ENCODE measurements at regions of chr21 and their contacts with region 1.

Region 1: GRCh38 chr21:45130324-45130774 is 56.0 kb downstream of the ADARB1 start:
- DNase-seq: no peak
- ATAC-seq: no peak
- H3K4me3 ChIP-seq: no peak overlapping the region
- H3K4me3 Mint-ChIP-seq: no peak overlapping the region
- H3K27ac ChIP-seq: no peak overlapping the region
- H3K27ac Mint-ChIP-seq: no peak overlapping the region
- H3K4me1 ChIP-seq: peaks cover 16% of the 10 kb centered on the region
- H3K4me1 Mint-ChIP-seq: peaks cover 35% of the 10 kb centered on the region
- H3K27me3 ChIP-seq: no peaks in the 10 kb centered on the region
- H3K27me3 Mint-ChIP-seq: no peaks in the 10 kb centered on the region
- CTCF ChIP-seq: no peak

Region 2: DNA sequence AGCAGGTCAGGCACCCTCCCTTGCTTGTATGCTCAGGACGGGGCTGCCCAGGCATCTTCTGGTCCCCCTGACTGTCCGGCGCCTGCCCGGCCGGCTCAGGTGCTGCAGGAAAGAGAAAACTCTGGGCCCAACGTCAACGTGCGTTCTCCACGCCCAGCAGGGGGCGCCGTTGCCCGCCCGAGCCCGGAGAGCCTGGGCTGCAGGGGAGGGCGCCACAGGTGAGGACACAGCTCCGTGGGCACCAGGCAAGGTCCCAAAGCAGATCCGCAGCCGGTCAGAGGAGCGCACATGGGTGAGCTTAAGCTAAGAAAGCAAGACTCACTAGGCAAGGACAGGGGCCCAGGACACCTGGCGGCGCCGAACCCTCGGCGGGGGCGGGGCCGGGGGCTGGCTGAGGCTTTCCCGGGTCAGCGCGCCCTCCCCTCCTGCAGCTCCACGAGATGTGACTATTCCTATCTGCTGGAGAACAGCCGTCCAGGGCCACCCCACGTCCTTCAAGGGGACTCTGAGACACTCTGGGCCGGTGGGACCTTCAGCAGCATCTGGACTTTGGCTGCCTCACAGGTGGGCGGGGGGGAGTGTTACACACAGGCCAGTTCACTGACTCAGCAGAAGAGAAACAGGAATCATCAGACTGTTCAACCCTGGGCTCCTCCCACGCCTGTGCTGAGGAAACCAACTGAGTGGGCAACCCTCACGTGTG is 619.7 kb before region 1 on chr21:
- CTCF ChIA-PET with region 1: no interaction called
- POLR2A ChIA-PET with region 1: no interaction called
- intact Hi-C with region 1: loop called in 1 of 2 experiments (anchors 10 kb)
- DNase-seq: peak; percentile 68 to 91 (median 82)
- ATAC-seq: peak; percentile 96
- H3K4me3 ChIP-seq: peak overlapping the region; percentile 41
- H3K4me3 Mint-ChIP-seq: peak overlapping the region; percentile 42
- H3K27ac ChIP-seq: no peak overlapping the region
- H3K27ac Mint-ChIP-seq: no peak overlapping the region
- H3K4me1 ChIP-seq: peaks cover 12% of the 10 kb centered on the region
- H3K4me1 Mint-ChIP-seq: no peaks in the 10 kb centered on the region
- H3K27me3 ChIP-seq: no peaks in the 10 kb centered on the region
- H3K27me3 Mint-ChIP-seq: no peaks in the 10 kb centered on the region
- CTCF ChIP-seq: peak; percentile 96

Region 3: GRCh38 chr21:44626262-44626661 is 504.1 kb before region 1 on chr21:
- CTCF ChIA-PET with region 1: no interaction called
- POLR2A ChIA-PET with region 1: no interaction called
- intact Hi-C with region 1: no loop called
- DNase-seq: peak in 1 of 14 experiments; percentile 68
- ATAC-seq: no peak
- H3K4me3 ChIP-seq: no peak overlapping the region
- H3K4me3 Mint-ChIP-seq: no peak overlapping the region
- H3K27ac ChIP-seq: no peak overlapping the region
- H3K27ac Mint-ChIP-seq: no peak overlapping the region
- H3K4me1 ChIP-seq: peaks cover 47% of the 10 kb centered on the region
- H3K4me1 Mint-ChIP-seq: peaks cover 25% of the 10 kb centered on the region
- H3K27me3 ChIP-seq: no peaks in the 10 kb centered on the region
- H3K27me3 Mint-ChIP-seq: no peaks in the 10 kb centered on the region
- CTCF ChIP-seq: no peak

Region 4: DNA sequence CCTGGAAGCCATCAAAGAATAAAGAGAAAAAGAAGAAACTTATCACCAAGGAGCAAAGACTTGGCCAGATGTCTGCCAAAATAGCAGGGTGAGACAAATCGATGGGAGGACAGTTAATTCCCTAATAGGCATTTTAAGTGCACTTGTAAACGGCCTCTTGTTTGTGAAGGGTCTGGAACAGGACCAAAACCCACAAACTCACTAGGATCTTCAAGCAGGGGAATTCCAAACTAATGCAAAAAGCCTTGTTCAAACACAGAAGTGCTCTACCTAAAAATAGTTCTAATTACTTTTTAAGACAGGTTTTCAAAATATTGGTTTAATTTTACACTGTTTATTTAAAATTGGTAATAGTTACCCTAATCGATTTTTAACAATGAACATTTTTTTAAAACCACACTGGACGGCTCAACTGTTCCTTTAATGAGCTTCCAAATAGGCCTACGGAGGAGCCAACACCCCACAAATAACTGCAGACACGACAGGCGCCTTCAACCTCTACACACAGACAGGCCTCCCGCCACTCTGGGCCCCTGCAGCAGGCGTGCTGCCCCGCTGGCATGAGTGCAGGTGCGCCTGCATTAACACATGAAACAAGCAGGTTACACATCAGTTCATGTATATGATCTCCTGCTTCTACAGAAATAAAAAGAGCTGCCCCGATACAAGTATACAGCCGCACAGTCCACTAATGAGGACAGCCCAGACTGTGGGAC is 344.6 kb before region 1 on chr21:
- CTCF ChIA-PET with region 1: no interaction called
- POLR2A ChIA-PET with region 1: no interaction called
- intact Hi-C with region 1: no loop called
- DNase-seq: no peak
- ATAC-seq: no peak
- H3K4me3 ChIP-seq: no peak overlapping the region
- H3K4me3 Mint-ChIP-seq: no peak overlapping the region
- H3K27ac ChIP-seq: no peak overlapping the region
- H3K27ac Mint-ChIP-seq: no peak overlapping the region
- H3K4me1 ChIP-seq: no peaks in the 10 kb centered on the region
- H3K4me1 Mint-ChIP-seq: peaks cover 47% of the 10 kb centered on the region
- H3K27me3 ChIP-seq: no peaks in the 10 kb centered on the region
- H3K27me3 Mint-ChIP-seq: no peaks in the 10 kb centered on the region
- CTCF ChIP-seq: no peak

Region 5: GRCh38 chr21:44949779-44950198 is 180.6 kb before region 1 on chr21:
- CTCF ChIA-PET with region 1: interaction called, 35 read pairs
- POLR2A ChIA-PET with region 1: interaction called, 4 read pairs
- intact Hi-C with region 1: loop called (anchors 1 kb)
- DNase-seq: peak; percentile 73 to 91 (median 82)
- ATAC-seq: peak; percentile 88
- H3K4me3 ChIP-seq: no peak overlapping the region
- H3K4me3 Mint-ChIP-seq: no peak overlapping the region
- H3K27ac ChIP-seq: no peak overlapping the region
- H3K27ac Mint-ChIP-seq: no peak overlapping the region
- H3K4me1 ChIP-seq: peaks cover 16% of the 10 kb centered on the region
- H3K4me1 Mint-ChIP-seq: peaks cover 5% of the 10 kb centered on the region
- H3K27me3 ChIP-seq: no peaks in the 10 kb centered on the region
- H3K27me3 Mint-ChIP-seq: no peaks in the 10 kb centered on the region
- CTCF ChIP-seq: peak; percentile 92

Region 6: DNA sequence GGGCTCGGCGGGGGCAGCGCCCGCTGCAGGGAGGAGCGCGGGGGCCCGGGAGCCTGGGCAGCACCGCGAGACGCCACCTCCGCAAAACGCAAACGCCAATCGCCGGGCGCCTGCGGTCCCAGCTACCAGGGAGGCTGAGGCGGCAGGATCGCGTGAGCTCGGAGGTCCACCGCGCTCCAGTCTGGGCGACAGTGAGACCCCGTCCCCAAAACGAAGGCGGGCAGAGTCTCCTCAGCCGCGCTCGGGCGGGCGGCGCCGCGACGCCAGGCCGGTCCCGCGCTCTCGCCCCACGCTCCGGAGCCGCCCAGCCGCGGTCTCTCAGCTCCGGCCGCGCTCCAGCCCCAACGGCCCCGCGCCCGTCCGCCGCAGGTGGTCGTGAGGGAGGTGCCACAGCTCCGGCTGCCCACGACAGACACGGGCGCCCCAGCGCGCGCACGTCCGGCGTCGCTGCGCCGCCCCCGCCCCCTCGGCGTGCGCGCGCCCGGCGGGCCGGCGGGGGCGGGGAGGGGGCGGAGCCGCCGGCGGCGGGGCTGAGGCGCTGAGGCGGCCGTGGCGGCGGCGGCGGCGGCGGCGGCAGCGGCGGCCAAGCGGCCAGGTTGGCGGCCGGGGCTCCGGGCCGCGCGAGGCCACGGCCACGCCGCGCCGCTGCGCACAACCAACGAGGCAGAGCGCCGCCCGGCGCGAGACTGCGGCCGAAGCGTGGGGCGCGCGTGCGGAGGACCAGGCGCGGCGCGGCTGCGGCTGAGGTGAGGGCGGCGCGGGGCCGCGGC is 56.1 kb before region 1 on chr21 and contains the start of gene ADARB1:
- CTCF ChIA-PET with region 1: interaction called, 19 read pairs
- POLR2A ChIA-PET with region 1: interaction called, 9 read pairs
- intact Hi-C with region 1: loop called in 1 of 2 experiments (anchors 2 kb)
- DNase-seq: peak; percentile 28 to 90 (median 58)
- ATAC-seq: peak; percentile 31
- H3K4me3 ChIP-seq: peak within 1 kb of the TSS; percentile 62
- H3K4me3 Mint-ChIP-seq: peak within 1 kb of the TSS; percentile 100
- H3K27ac ChIP-seq: no peak within 1 kb of the TSS
- H3K27ac Mint-ChIP-seq: peak within 1 kb of the TSS; percentile 98
- H3K4me1 ChIP-seq: peaks cover 44% of the 10 kb centered on the region
- H3K4me1 Mint-ChIP-seq: peaks cover 42% of the 10 kb centered on the region
- H3K27me3 ChIP-seq: no peaks in the 10 kb centered on the region
- H3K27me3 Mint-ChIP-seq: no peaks in the 10 kb centered on the region
- CTCF ChIP-seq: no peak
- total RNA-seq, gene ADARB1: 27.5 to 28.6 TPM

Region 7: GRCh38 chr21:45117314-45117713 is 13.0 kb before region 1 on chr21:
- CTCF ChIA-PET with region 1: interaction called, 10 read pairs
- POLR2A ChIA-PET with region 1: no interaction called
- intact Hi-C with region 1: no loop called
- DNase-seq: no peak
- ATAC-seq: peak; percentile 74
- H3K4me3 ChIP-seq: no peak overlapping the region
- H3K4me3 Mint-ChIP-seq: no peak overlapping the region
- H3K27ac ChIP-seq: no peak overlapping the region
- H3K27ac Mint-ChIP-seq: peak overlapping the region; percentile 69
- H3K4me1 ChIP-seq: no peaks in the 10 kb centered on the region
- H3K4me1 Mint-ChIP-seq: peaks cover 47% of the 10 kb centered on the region
- H3K27me3 ChIP-seq: no peaks in the 10 kb centered on the region
- H3K27me3 Mint-ChIP-seq: no peaks in the 10 kb centered on the region
- CTCF ChIP-seq: no peak

Region 8: DNA sequence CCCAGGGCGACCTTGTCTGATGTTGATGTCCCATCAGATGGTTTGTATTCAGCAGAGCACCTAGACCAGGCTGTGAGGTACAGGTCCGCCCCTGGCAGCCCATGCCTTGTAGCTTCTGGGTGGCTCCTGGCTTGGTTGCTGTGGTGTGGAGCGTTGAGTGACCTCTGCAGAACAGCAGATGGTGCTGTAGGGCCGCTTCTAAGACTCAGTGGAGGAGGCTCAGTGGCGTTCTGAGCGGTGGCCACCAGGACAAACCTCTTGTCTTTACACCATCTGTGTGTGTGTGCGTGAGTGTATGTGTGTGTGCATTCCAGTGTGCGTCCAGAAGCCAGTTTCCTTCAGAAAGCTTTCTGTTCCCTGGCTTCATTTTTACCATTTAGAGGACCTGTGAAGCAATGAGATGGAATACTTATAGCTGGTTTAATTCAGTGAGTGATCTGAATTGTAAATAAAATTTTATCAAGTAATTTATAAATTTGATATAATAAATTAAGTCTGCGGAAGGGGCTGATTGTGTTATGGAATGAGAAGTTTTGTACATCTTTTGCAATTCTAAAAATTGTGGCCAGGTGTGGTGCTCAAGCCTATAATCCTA is 10.1 kb after region 1 on chr21:
- CTCF ChIA-PET with region 1: interaction called, 31 read pairs
- POLR2A ChIA-PET with region 1: no interaction called
- intact Hi-C with region 1: no loop called
- DNase-seq: peak; percentile 30 to 83 (median 50)
- ATAC-seq: peak; percentile 93
- H3K4me3 ChIP-seq: no peak overlapping the region
- H3K4me3 Mint-ChIP-seq: no peak overlapping the region
- H3K27ac ChIP-seq: no peak overlapping the region
- H3K27ac Mint-ChIP-seq: no peak overlapping the region
- H3K4me1 ChIP-seq: peaks cover 12% of the 10 kb centered on the region
- H3K4me1 Mint-ChIP-seq: peaks cover 21% of the 10 kb centered on the region
- H3K27me3 ChIP-seq: no peaks in the 10 kb centered on the region
- H3K27me3 Mint-ChIP-seq: no peaks in the 10 kb centered on the region
- CTCF ChIP-seq: peak; percentile 48

Measured in CD4-positive, alpha-beta T cell (primary cell).